ENCODE measurements at regions of chr4 and their contacts with region 1.

Region 1: GRCh38 chr4:123244137-123244536 is 152.5 kb upstream of the SPRY1 start:
- DNase-seq: peak; percentile 51 to 65
- ATAC-seq: peak; percentile 75 to 98 (median 96)
- H3K4me3 ChIP-seq: peak overlapping the region in 1 of 10 donors; percentile 15
- H3K27ac ChIP-seq: peak overlapping the region in 2 of 10 donors; percentile 9 to 68
- H3K4me1 ChIP-seq: peaks cover 2 to 48% (median 36%) of the 10 kb centered on the region in 9 donors
- H3K27me3 ChIP-seq: no peaks in the 10 kb centered on the region
- CTCF ChIP-seq: peak in 7 of 9 donors; percentile 22 to 72 (median 45)

Region 2: GRCh38 chr4:122814426-122814825 is 429.7 kb before region 1 on chr4:
- intact Hi-C with region 1: no loop called
- DNase-seq: no peak
- ATAC-seq: no peak
- H3K4me3 ChIP-seq: no peak overlapping the region
- H3K27ac ChIP-seq: no peak overlapping the region
- H3K4me1 ChIP-seq: peaks cover 0 to 6% (median 0%) of the 10 kb centered on the region in 9 donors
- H3K27me3 ChIP-seq: no peaks in the 10 kb centered on the region
- CTCF ChIP-seq: no peak

Region 3: GRCh38 chr4:123133397-123134050 is 110.6 kb before region 1 on chr4:
- intact Hi-C with region 1: loop called in 1 of 10 experiments (anchors 5 kb)
- DNase-seq: no peak
- ATAC-seq: no peak
- H3K4me3 ChIP-seq: no peak overlapping the region
- H3K27ac ChIP-seq: no peak overlapping the region
- H3K4me1 ChIP-seq: peaks cover 0 to under 1% (median 0%) of the 10 kb centered on the region in 9 donors
- H3K27me3 ChIP-seq: no peaks in the 10 kb centered on the region
- CTCF ChIP-seq: no peak

Region 4: DNA sequence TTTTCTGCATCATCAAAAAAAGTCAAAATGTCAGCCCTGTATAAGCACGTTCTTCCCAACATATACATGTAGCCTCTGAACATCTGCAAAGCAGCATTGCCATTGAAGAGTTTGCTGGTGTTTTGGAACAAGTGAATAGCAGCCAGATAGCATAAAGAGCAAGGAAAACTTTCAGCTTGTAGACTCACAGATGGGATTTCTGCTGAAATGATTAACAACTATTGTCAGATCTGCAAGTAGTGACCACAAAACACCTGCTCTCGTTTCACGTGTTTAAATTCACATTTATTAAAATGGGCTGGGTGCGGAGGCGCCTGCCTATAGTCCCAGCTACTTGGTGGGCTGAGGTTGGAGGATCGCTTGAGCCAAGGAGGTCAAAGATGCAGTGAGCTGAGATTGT is 276.2 kb after region 1 on chr4:
- intact Hi-C with region 1: no loop called
- DNase-seq: no peak
- ATAC-seq: no peak
- H3K4me3 ChIP-seq: no peak overlapping the region
- H3K27ac ChIP-seq: no peak overlapping the region
- H3K4me1 ChIP-seq: no peaks in the 10 kb centered on the region
- H3K27me3 ChIP-seq: no peaks in the 10 kb centered on the region
- CTCF ChIP-seq: no peak

Region 5: GRCh38 chr4:123661080-123661737 is 417.1 kb after region 1 on chr4:
- intact Hi-C with region 1: no loop called
- DNase-seq: no peak
- ATAC-seq: no peak
- H3K4me3 ChIP-seq: no peak overlapping the region
- H3K27ac ChIP-seq: no peak overlapping the region
- H3K4me1 ChIP-seq: no peaks in the 10 kb centered on the region
- H3K27me3 ChIP-seq: no peaks in the 10 kb centered on the region
- CTCF ChIP-seq: peak in 8 of 9 donors; percentile 34 to 70 (median 55)

Measured in heart right ventricle (tissue), 16 donors.